Sciatic nerve (tissue), 2 donors: ENCODE measurements at regions of chr5 and their contacts with region 1.

Region 1: GRCh38 chr5:115898656-115899055 is 56.9 kb downstream of the AP3S1 start:
- DNase-seq: no peak
- ATAC-seq: no peak

Region 2: DNA sequence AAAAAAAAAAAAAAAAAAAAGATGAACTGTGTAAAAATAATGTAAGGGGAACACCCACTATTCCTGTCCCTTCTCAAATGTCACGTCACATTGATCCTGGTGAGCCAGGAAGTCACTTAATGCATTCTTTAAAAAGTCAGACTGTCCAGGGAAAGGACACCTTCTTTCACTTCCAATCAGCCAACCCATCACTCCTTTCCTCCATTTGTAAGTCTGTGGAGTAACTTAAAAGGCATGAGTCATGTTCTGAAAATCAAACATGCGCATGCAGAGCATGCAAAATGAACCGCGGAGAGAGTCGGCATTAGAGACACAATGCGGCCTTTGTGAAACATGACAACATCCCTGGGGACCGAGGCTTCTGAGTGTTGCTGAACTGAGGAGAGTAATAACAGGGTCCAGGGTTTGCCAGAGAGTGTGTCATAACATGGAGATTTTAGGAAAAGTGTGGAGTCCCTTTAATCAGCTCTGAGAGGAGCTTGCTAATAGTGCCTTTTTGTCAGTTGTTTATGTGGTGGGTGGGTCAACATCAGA is 753.6 kb after region 1 on chr5:
- intact Hi-C with region 1: loop called (anchors 5 kb)
- DNase-seq: peak; percentile 79
- ATAC-seq: peak; percentile 98